ENCODE measurements at regions of chr14 and their contacts with region 1.

Region 1: DNA sequence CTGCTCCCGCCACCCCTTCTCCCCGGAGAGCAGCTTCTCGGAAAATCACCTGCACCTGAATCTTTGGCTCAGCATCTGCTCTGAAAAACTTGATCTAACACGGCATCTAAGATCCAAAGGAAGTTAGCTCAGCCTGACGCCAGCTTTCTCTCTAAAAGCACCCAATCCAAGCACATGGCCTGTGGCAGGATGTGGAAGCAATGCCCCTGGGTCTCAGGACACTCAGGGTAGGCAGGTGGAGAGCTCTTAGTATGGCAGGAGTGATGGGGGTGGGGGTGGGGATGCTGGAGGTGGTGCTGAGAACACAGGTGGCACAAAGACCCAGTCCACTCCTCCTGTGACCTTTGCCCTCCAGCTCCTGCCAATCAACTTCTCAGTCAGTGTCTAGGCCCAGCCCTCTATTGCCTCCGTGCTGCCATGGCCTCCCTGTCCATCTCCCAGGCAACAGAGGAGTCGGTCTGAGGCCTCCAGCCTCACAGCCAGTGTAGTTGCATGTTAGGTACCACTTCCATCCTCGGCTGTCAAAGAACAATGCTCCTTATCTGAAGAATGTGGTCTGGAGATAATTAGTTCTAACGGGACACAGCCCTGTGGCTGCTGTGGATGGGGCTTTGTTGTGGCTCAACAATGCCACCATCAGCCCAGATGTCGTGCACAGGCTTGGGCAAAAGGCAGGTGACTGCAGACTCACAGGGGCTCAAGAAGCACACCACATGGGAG is 180.0 kb upstream of the C14orf180 start:
- DNase-seq: no peak
- ATAC-seq: peak; percentile 57
- H3K4me3 ChIP-seq: no peak overlapping the region
- H3K4me3 Mint-ChIP-seq: peak overlapping the region in 5 of 10 donors; percentile 10 to 54 (median 30)
- H3K27ac ChIP-seq: no peak overlapping the region
- H3K27ac Mint-ChIP-seq: peak overlapping the region; percentile 11 to 89 (median 60)
- H3K4me1 ChIP-seq: peaks cover 21 to 30% of the 10 kb centered on the region in 2 donors
- H3K4me1 Mint-ChIP-seq: peaks cover 18 to 59% (median 37%) of the 10 kb centered on the region in 7 donors
- H3K27me3 ChIP-seq: no peaks in the 10 kb centered on the region
- H3K27me3 Mint-ChIP-seq: no peaks in the 10 kb centered on the region

Region 2: GRCh38 chr14:103960457-103961055 is 439.0 kb before region 1 on chr14:
- CTCF ChIA-PET with region 1: no interaction called
- POLR2A ChIA-PET with region 1: no interaction called
- intact Hi-C with region 1: no loop called
- DNase-seq: no peak
- ATAC-seq: no peak
- H3K4me3 ChIP-seq: no peak overlapping the region
- H3K4me3 Mint-ChIP-seq: no peak overlapping the region
- H3K27ac ChIP-seq: no peak overlapping the region
- H3K27ac Mint-ChIP-seq: no peak overlapping the region
- H3K4me1 ChIP-seq: no peaks in the 10 kb centered on the region
- H3K4me1 Mint-ChIP-seq: peaks cover 0 to 2% (median 0%) of the 10 kb centered on the region in 7 donors
- H3K27me3 ChIP-seq: no peaks in the 10 kb centered on the region
- H3K27me3 Mint-ChIP-seq: peaks cover under 1 to 14% (median 6%) of the 10 kb centered on the region in 5 donors

Region 3: GRCh38 chr14:104137297-104138097 is 262.1 kb before region 1 on chr14:
- CTCF ChIA-PET with region 1: interaction called, 3 read pairs
- POLR2A ChIA-PET with region 1: no interaction called
- intact Hi-C with region 1: loop called in 1 of 2 experiments (anchors 2 kb)
- DNase-seq: peak; percentile 8 to 77 (median 48)
- ATAC-seq: peak; percentile 72
- H3K4me3 ChIP-seq: no peak overlapping the region
- H3K4me3 Mint-ChIP-seq: peak overlapping the region; percentile 25 to 81 (median 63)
- H3K27ac ChIP-seq: no peak overlapping the region
- H3K27ac Mint-ChIP-seq: no peak overlapping the region
- H3K4me1 ChIP-seq: no peaks in the 10 kb centered on the region
- H3K4me1 Mint-ChIP-seq: peaks cover 0 to 10% (median 5%) of the 10 kb centered on the region in 7 donors
- H3K27me3 ChIP-seq: peaks cover 0 to 12% of the 10 kb centered on the region in 2 donors
- H3K27me3 Mint-ChIP-seq: peaks cover 20 to 41% (median 29%) of the 10 kb centered on the region in 5 donors

Region 4: DNA sequence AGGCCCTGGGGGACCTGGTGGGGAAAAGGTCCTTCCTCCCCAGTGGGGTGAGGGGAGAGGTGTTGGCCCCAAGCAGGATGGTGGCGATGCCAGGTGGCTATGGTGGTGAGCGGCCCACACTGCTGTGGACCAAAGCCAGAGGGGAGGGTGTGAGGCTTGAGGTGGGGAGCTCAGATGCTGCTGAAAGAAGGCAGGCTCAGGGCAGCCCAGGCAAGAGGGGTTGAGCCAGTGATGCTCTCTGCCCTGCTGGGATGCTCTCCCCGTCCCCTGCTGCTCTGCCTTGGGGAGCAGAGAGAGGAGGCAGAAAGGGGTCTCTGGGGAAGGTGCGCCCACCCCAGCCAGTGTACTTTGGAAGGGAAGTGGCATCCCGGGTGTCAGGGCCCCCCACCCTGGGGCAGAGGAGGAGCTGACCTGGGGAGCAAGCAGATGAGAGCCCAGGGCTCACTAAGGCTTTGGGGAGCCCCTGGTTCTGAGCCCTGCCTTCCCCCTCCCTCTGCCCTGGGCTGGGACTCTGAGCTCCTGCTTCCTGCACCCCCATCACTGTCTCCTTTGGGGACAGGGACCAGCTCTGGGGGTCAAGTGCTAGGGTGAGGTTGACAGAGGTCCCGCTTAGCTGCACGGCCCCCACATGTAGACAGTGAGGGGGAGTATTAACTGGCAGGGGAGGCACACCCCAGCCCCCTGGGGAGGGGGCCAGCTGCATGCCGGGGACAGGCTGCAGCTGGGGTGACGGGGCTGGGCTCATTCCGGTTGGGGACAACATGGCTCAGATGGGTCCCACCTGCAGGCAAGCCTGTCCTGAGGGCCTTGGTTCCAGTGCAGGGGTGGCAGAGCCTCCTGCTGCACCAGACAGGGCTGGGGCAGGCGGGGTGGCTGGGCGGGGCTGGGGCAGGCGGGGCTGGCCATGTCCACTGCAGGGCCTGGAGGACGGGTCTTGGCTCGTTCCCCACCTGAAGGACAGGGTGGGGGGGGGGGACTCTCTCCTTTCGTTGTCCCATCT is 136.8 kb before region 1 on chr14:
- CTCF ChIA-PET with region 1: no interaction called
- POLR2A ChIA-PET with region 1: no interaction called
- intact Hi-C with region 1: no loop called
- DNase-seq: peak in 1 of 9 donors; percentile 3
- ATAC-seq: peak; percentile 20
- H3K4me3 ChIP-seq: no peak overlapping the region
- H3K4me3 Mint-ChIP-seq: no peak overlapping the region
- H3K27ac ChIP-seq: no peak overlapping the region
- H3K27ac Mint-ChIP-seq: no peak overlapping the region
- H3K4me1 ChIP-seq: peaks cover 0 to 3% of the 10 kb centered on the region in 2 donors
- H3K4me1 Mint-ChIP-seq: peaks cover 0 to 5% (median 0%) of the 10 kb centered on the region in 7 donors
- H3K27me3 ChIP-seq: no peaks in the 10 kb centered on the region
- H3K27me3 Mint-ChIP-seq: peaks cover 8 to 28% (median 12%) of the 10 kb centered on the region in 5 donors

Region 5: GRCh38 chr14:105267820-105268548 is 868.4 kb after region 1 on chr14:
- CTCF ChIA-PET with region 1: no interaction called
- POLR2A ChIA-PET with region 1: no interaction called
- intact Hi-C with region 1: no loop called
- DNase-seq: no peak
- ATAC-seq: no peak
- H3K4me3 ChIP-seq: no peak overlapping the region
- H3K4me3 Mint-ChIP-seq: no peak overlapping the region
- H3K27ac ChIP-seq: no peak overlapping the region
- H3K27ac Mint-ChIP-seq: no peak overlapping the region
- H3K4me1 ChIP-seq: no peaks in the 10 kb centered on the region
- H3K4me1 Mint-ChIP-seq: peaks cover 0 to 15% (median 4%) of the 10 kb centered on the region in 7 donors
- H3K27me3 ChIP-seq: no peaks in the 10 kb centered on the region
- H3K27me3 Mint-ChIP-seq: no peaks in the 10 kb centered on the region